ENCODE measurements at regions of chr20 and their contacts with region 1.

Region 1: GRCh38 chr20:33450867-33451266 is 7.3 kb upstream of the SNTA1 start:
- DNase-seq: no peak
- H3K4me3 Mint-ChIP-seq: no peak overlapping the region
- H3K27ac Mint-ChIP-seq: no peak overlapping the region
- H3K4me1 Mint-ChIP-seq: no peaks in the 10 kb centered on the region
- H3K27me3 Mint-ChIP-seq: no peaks in the 10 kb centered on the region

Region 2: DNA sequence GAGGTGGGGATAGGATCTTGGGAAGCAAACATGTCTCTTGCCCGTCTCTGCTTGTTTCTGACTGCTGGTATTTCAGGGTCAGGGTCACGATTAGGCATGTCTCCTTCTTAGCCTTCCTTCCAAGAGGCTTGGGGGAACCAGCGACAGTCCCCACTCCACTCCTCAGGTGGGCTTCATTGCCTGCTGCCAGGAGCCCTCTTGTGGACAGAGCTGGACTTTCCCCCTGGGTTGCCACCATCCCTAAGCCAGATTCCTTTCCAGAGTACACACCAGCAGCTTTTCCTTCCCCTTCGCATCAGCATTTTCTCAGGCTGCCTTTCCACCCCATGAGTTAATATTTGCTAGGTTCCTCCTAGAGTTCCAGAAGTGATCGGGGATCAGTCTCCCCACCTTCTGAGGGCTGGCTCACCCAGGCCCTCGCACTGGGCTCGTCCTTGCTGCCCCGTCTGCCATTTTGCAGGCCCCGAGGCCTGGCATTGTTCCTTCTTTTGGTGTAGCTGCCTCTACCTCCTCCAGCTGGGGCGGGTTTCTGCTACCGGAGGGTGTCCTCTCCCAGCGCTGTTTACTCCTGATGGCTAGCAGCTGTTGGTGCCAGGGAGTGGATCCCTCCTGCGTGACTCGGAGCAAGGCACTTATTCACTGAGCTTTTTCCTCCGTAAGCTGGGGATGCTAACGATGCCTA is 202.5 kb after region 1 on chr20:
- intact Hi-C with region 1: loop called (anchors 2 kb)
- DNase-seq: no peak
- H3K4me3 Mint-ChIP-seq: no peak overlapping the region
- H3K27ac Mint-ChIP-seq: no peak overlapping the region
- H3K4me1 Mint-ChIP-seq: peaks cover 22% of the 10 kb centered on the region
- H3K27me3 Mint-ChIP-seq: no peaks in the 10 kb centered on the region

Region 3: DNA sequence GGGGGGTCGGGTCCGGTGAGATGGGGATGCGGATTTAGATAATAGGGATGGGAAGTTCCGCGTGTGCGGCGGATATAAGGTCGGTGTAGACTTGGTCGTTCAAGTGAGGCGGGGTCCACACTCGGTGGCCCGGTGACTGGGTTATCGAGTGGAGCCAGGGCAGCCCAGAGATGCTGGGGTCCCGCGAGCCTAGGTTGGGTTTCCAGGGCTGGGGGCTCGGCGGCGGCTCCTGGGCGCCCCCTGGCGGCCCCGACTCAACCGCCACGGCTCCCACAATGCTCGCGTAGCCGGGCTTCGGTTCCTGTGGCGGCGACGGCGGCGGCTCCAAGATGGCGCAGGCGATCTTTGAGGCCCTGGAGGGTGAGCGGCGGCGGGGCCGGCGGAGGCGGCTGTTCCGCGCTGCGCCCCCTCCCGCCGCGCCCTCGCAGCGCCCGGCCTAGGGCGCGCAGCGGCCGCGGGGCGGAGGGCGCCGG is 280.9 kb after region 1 on chr20 and contains the start of gene ZNF341:
- intact Hi-C with region 1: loop called (anchors 2 kb)
- DNase-seq: peak; percentile 88
- H3K4me3 Mint-ChIP-seq: peak within 1 kb of the TSS; percentile 89
- H3K27ac Mint-ChIP-seq: peak within 1 kb of the TSS; percentile 94
- H3K4me1 Mint-ChIP-seq: peaks cover 18% of the 10 kb centered on the region
- H3K27me3 Mint-ChIP-seq: no peaks in the 10 kb centered on the region
- total RNA-seq, gene ZNF341: 6.8 and 7.0 TPM in 2 replicates